Activated T-helper 2 cell treated with anti-CD3 and anti-CD28 coated beads, Interferon-gamma antibody, Interleukin-2, Interleukin-4, amounts not matched to agents 10 μg/mL and 5 μg/mL and 100 μg/mL, durations not matched to agents 14 hours and 24 hours and 36 hours (primary cell): ENCODE measurements at regions of chr11 and their contacts with region 1.

Region 1: GRCh38 chr11:727859-728748 is 19.2 kb upstream of the TALDO1 start:
- DNase-seq: peak; percentile 73
- H3K4me3 Mint-ChIP-seq: no peak overlapping the region
- H3K27ac Mint-ChIP-seq: no peak overlapping the region
- H3K4me1 Mint-ChIP-seq: peaks cover 4% of the 10 kb centered on the region
- H3K27me3 Mint-ChIP-seq: peaks cover 3% of the 10 kb centered on the region

Region 2: DNA sequence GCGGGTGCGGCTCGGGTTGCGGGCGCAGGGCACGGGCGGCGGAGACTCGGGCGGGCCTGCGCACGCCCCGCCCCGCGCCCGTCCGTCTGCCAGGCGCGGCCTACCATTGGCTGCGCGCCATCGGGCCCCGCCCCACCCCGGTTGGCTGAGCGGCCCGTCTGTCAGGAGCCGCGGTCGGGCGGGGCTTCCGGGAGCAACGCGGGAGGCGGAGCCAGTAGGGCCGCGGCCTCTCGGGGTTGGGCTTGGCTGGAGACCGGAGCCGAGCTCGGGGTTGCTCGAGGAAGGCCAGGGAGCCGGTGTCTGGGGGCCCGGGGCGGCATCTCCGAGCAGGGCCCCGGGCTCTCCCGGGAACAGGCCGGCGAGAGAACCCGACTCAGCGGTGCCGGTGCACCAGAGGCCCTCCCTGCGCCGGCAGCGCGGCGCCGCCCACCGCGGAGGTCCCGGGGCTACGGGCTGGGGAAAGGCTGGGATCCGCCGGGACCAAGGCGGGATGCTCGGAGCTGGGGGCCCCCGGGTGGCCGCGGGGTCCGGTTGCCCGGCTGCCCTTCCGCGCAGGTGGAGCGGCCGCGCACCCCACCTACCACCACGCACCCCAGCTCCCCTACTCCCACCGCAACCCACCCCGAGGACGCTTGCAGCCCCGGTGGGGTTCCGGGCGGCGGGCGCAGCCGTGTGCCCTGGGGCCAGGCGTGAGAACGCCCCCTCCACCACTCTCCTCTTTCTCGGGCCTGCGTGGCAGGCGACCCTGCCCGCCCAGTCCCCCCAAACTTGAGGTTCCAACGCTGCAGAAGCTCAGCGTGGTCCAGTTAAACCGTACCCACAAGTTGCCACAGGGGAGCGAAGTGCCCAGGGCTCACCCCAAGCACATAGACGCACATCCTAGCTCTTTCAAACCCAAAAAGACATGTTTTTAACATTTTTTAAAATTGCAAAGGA is 192.3 kb before region 1 on chr11 and contains the start of gene HRAS:
- intact Hi-C with region 1: loop called (anchors 5 kb)
- DNase-seq: peak; percentile 94
- H3K4me3 Mint-ChIP-seq: peak within 1 kb of the TSS; percentile 89
- H3K27ac Mint-ChIP-seq: peak within 1 kb of the TSS; percentile 82
- H3K4me1 Mint-ChIP-seq: peaks cover 2% of the 10 kb centered on the region
- H3K27me3 Mint-ChIP-seq: no peaks in the 10 kb centered on the region
- total RNA-seq, gene HRAS: 70.5 and 71.5 TPM in 2 replicates

Region 3: DNA sequence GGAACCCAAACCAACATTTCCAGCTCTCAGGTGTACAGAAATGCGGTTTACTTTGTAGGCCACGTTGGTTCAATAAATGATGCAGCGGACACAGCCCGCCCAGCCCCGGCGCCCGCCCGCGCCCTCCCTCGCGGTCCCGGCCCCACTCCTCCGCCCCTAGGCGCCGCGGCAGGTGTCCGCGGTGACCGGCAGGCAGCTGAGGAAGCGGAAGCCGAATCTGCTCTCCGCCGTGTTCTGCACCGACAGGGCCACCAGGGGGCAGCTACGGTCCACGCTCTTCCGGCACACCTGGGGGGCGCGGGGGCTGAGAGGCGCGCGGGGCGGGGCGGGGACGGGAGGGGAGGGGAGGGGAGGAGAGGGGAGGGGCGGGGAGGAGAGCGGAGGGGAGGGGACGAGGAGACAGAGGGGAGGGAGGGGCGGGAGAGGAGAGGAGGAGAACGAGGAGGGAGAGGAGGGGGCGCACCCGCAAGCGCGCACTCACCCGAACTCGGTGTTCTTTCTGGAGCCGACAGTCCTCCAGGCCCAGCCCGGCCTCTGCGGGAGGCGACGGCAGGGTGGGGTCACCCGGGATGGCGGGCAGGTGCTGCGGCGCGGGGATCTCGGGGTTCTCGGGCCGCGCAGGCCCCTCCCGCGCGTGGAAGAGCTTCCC is 173.2 kb before region 1 on chr11:
- intact Hi-C with region 1: loop called (anchors 1 kb)
- DNase-seq: peak; percentile 59
- H3K4me3 Mint-ChIP-seq: peak overlapping the region; percentile 42
- H3K27ac Mint-ChIP-seq: no peak overlapping the region
- H3K4me1 Mint-ChIP-seq: peaks cover 3% of the 10 kb centered on the region
- H3K27me3 Mint-ChIP-seq: peaks cover 18% of the 10 kb centered on the region

Region 4: DNA sequence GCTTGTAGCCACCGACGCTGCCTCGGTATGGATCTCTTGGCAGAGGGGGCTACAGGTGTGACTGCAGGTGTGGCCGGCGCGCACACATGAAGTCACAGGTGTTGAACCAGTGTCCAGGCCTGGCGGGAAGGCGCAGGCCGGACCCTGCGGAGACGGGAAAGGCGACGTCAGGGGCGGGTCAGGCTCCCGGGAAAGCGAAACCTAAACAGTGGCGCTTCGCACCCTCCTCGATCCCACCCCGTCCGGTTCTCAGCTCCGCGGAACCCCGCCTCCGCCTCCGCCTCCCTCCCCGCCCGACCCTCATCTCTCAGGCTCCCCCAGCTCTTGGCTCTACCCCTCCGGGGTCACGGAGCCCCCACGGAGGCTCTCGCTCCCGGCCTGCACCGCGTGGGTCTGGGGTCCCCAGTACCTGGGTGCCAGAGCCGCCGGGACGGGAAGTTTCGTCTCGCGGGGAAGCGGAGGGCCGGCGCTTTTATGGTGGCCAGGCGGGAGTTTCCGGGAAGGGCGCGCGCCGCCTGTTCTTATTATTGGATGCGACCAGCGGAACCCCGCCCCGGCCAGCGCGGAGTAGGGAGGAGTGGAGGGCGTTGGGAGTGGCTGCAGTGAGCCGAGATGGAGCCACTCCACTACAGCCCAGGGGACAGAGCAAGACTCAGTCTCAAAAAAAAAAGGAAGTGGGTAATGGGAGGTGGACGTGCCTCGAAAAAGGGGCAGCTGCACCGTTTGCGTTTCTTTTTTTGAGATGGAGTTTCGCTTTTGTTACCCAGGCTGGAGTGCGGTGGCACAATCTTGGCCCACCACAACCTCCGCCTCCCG is 112.4 kb before region 1 on chr11 and contains the start of gene IRF7:
- intact Hi-C with region 1: loop called (anchors 10 kb)
- DNase-seq: peak; percentile 85
- H3K4me3 Mint-ChIP-seq: peak within 1 kb of the TSS; percentile 85
- H3K27ac Mint-ChIP-seq: peak within 1 kb of the TSS; percentile 69
- H3K4me1 Mint-ChIP-seq: peaks cover 8% of the 10 kb centered on the region
- H3K27me3 Mint-ChIP-seq: no peaks in the 10 kb centered on the region
- total RNA-seq, gene IRF7: 26.8 and 30.3 TPM in 2 replicates

Region 5: DNA sequence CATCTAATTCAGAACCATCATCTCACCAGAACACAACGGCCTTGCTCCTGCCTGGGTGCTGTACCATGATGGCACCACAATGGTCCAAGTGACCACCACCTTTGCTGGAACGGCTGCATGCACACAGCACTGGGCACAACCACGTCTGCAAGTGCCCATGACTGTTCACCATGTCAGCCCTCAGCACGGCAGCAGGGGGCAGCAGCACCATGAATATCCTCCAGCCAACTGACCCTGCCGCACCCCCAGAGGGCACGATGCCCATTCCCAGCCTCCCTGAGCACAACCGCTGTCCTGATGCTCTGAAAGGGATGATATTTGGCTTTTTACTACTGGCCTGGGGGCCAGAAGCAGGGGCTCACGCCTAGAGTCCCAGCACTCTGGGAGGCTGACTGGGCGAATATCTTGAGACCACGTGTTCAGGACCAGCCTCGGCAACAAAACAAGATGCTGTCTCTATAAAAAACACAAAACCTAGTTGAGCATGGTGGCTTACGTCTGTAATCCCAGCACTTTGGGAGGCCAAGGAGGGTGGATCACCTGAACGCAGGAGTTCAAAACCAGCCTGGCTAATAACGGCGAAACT is 65.3 kb before region 1 on chr11:
- intact Hi-C with region 1: loop called (anchors 2 kb)
- DNase-seq: peak; percentile 16
- H3K4me3 Mint-ChIP-seq: no peak overlapping the region
- H3K27ac Mint-ChIP-seq: no peak overlapping the region
- H3K4me1 Mint-ChIP-seq: no peaks in the 10 kb centered on the region
- H3K27me3 Mint-ChIP-seq: no peaks in the 10 kb centered on the region

Region 6: GRCh38 chr11:695538-696248 is 32.4 kb before region 1 on chr11 and contains the start of gene TMEM80:
- intact Hi-C with region 1: loop called (anchors 1 kb)
- DNase-seq: peak; percentile 98
- H3K4me3 Mint-ChIP-seq: peak within 1 kb of the TSS; percentile 83
- H3K27ac Mint-ChIP-seq: peak within 1 kb of the TSS; percentile 89
- H3K4me1 Mint-ChIP-seq: peaks cover 47% of the 10 kb centered on the region
- H3K27me3 Mint-ChIP-seq: no peaks in the 10 kb centered on the region
- total RNA-seq, gene TMEM80: 11.4 and 13.0 TPM in 2 replicates

Region 7: DNA sequence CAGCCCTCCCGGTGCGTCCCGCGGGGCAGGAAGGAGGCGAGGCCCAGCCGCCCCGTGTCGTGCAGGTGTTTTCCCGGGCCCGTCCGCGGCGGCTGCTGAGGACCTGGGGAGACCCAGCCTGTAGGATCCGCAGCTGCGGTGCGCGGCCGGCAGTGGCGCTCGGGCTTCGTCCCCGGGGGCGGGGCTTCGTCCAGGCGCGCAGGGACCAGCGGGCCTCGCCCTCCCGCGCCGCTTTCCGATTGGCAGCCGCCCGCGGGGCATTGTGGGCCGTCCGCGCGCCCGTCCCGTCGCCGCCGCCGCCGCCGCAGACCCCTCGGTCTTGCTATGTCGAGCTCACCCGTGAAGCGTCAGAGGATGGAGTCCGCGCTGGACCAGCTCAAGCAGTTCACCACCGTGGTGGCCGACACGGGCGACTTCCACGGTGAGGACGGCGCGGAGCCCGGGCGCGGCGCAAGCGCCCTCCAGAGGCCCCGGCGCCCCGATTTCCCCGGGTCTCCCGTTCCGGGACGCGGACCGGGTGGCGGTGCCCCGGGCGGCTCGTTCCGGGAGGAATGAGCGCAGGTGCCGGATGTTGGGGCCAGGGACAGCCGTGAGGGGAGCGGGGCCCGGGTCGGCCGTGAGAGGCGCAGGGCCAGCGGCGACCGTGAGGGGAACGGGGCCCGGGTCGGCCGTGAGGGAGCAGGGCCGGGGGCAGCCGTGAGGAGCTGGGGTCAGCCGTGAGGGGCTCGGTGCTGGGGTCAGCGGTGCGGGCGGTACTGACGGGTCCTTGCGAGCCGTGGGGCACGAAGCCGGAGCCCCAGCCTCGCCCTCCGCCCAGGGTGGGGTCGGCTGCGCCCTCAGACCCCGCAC is 19.3 kb after region 1 on chr11 and contains the start of gene TALDO1:
- intact Hi-C with region 1: loop called (anchors 2 kb)
- DNase-seq: peak; percentile 84
- H3K4me3 Mint-ChIP-seq: peak within 1 kb of the TSS; percentile 85
- H3K27ac Mint-ChIP-seq: peak within 1 kb of the TSS; percentile 77
- H3K4me1 Mint-ChIP-seq: peaks cover 18% of the 10 kb centered on the region
- H3K27me3 Mint-ChIP-seq: no peaks in the 10 kb centered on the region
- total RNA-seq, gene TALDO1: 270 and 275 TPM in 2 replicates